ENCODE measurements at regions of chr6 and their contacts with region 1.

Region 1: GRCh38 chr6:10528170-10528981 is 7.2 kb downstream of the GCNT2 start:
- DNase-seq: peak; percentile 86
- ATAC-seq: peak; percentile 73
- H3K4me3 ChIP-seq: peak overlapping the region; percentile 64 to 93
- H3K27ac ChIP-seq: peak overlapping the region; percentile 98
- H3K4me1 ChIP-seq: peaks cover 22% of the 10 kb centered on the region
- H3K27me3 ChIP-seq: no peaks in the 10 kb centered on the region
- CTCF ChIP-seq: no peak

Region 2: DNA sequence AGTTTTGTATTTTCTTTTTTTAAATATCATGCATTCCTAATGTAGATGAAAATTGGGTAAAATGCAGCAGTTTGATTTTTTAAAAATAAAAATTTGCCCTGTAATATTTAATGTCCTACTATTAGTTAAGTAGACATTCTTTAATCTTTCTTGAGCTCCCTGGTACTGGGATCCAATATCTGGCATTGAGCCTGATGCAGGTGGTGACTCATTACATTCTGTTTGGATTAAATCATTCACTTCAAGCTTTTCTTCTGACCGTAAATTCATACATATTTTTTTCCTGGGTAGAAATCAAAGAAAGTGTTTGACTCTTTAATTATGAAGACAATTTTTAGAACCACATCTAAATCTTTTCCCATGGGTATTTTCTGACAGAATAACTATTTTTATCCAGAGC is 1324.2 kb before region 1 on chr6:
- CTCF ChIA-PET with region 1: interaction called, 21 read pairs
- POLR2A ChIA-PET with region 1: no interaction called
- in situ Hi-C with region 1: no loop called
- intact Hi-C with region 1: no loop called
- DNase-seq: peak; percentile 54
- ATAC-seq: no peak
- H3K4me3 ChIP-seq: no peak overlapping the region
- H3K27ac ChIP-seq: no peak overlapping the region
- H3K4me1 ChIP-seq: no peaks in the 10 kb centered on the region
- H3K27me3 ChIP-seq: no peaks in the 10 kb centered on the region
- CTCF ChIP-seq: no peak

Region 3: GRCh38 chr6:10779076-10779475 is 250.7 kb after region 1 on chr6:
- CTCF ChIA-PET with region 1: no interaction called
- POLR2A ChIA-PET with region 1: no interaction called
- in situ Hi-C with region 1: no loop called
- intact Hi-C with region 1: no loop called
- DNase-seq: no peak
- ATAC-seq: 0 out of 2 replicates have a peak, but pooled peaks have one; percentile 17
- H3K4me3 ChIP-seq: no peak overlapping the region
- H3K27ac ChIP-seq: no peak overlapping the region
- H3K4me1 ChIP-seq: no peaks in the 10 kb centered on the region
- H3K27me3 ChIP-seq: no peaks in the 10 kb centered on the region
- CTCF ChIP-seq: no peak

Region 4: DNA sequence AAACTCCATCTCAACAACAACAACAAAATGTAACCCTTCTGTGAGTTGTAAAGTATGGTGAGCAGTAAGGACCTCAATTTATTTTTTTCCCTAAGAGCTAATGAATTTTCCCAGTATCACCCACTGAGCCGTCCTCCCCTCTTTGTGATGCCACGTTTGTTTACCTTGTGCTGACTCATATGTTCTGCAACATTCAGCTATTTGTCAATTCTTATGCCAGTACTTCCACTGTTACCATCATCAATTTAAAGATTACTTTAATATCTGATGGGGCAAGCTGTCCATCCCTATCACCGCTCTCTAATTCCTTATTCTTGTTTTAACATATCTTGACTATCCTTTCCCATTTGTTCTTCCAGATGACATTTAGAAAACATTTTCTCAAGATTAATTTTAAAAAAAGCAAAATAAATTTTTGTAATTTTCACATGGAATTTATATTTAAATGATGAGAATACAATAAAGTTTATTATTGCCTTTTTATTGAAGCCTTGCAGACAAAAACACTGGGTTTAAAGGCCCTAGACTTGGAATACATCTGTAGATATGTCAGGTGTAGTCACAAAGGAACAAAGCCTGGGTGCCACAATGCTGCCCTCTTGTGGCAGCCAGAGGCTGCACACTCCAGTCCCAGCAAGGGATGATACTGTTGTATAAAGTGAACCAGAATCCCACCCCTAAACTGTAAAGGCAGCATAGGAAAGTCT is 272.6 kb after region 1 on chr6:
- CTCF ChIA-PET with region 1: no interaction called
- POLR2A ChIA-PET with region 1: no interaction called
- in situ Hi-C with region 1: no loop called
- intact Hi-C with region 1: loop called (anchors 10 kb)
- DNase-seq: peak; percentile 61
- ATAC-seq: peak; percentile 99
- H3K4me3 ChIP-seq: no peak overlapping the region
- H3K27ac ChIP-seq: no peak overlapping the region
- H3K4me1 ChIP-seq: no peaks in the 10 kb centered on the region
- H3K27me3 ChIP-seq: no peaks in the 10 kb centered on the region
- CTCF ChIP-seq: peak; percentile 99